ENCODE measurements at regions of chr3 and their contacts with region 1.

Region 1: GRCh38 chr3:42247576-42248027 is 18.4 kb downstream of the CCK start:
- DNase-seq: peak; percentile 82
- H3K4me3 Mint-ChIP-seq: no peak overlapping the region
- H3K27ac Mint-ChIP-seq: no peak overlapping the region
- H3K4me1 Mint-ChIP-seq: peaks cover 8% of the 10 kb centered on the region
- H3K27me3 Mint-ChIP-seq: peaks cover 8% of the 10 kb centered on the region

Region 2: GRCh38 chr3:42267878-42268277 is 20.3 kb after region 1 on chr3:
- CTCF ChIA-PET with region 1: interaction called, 10 read pairs
- intact Hi-C with region 1: no loop called
- DNase-seq: no peak
- H3K4me3 Mint-ChIP-seq: no peak overlapping the region
- H3K27ac Mint-ChIP-seq: no peak overlapping the region
- H3K4me1 Mint-ChIP-seq: peaks cover 9% of the 10 kb centered on the region
- H3K27me3 Mint-ChIP-seq: peaks cover 58% of the 10 kb centered on the region

Region 3: GRCh38 chr3:42539869-42540714 is 292.5 kb after region 1 on chr3:
- CTCF ChIA-PET with region 1: interaction called, 12 read pairs
- intact Hi-C with region 1: loop called (anchors 2 kb)
- DNase-seq: peak; percentile 78
- H3K4me3 Mint-ChIP-seq: no peak overlapping the region
- H3K27ac Mint-ChIP-seq: no peak overlapping the region
- H3K4me1 Mint-ChIP-seq: peaks cover 5% of the 10 kb centered on the region
- H3K27me3 Mint-ChIP-seq: no peaks in the 10 kb centered on the region

Region 4: DNA sequence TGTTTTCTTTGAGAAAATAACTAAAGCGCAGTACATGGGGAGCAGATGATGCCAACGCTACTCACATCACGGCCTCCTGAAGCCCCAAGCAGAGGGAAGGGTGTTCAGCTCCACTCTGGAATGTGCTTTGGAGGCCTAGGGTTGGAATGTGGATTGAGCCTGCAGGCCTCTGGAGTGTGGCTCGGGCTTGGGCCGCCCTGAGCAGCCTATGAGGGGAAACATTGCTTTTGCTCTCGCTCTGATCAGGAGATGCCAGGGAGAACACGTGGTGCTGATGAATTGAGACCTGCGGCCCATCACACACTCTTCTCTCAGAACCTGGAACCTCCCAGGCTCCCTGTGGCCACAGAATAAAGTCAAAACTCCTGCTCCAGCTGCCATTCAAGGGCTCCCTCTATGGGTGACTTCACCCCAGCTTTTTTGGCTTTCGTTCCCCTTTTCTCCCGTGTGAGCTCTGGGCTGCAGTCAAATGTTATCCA is 502.2 kb after region 1 on chr3:
- CTCF ChIA-PET with region 1: no interaction called
- intact Hi-C with region 1: loop called (anchors 10 kb)
- DNase-seq: peak; percentile 29
- H3K4me3 Mint-ChIP-seq: no peak overlapping the region
- H3K27ac Mint-ChIP-seq: no peak overlapping the region
- H3K4me1 Mint-ChIP-seq: peaks cover 26% of the 10 kb centered on the region
- H3K27me3 Mint-ChIP-seq: no peaks in the 10 kb centered on the region

Region 5: GRCh38 chr3:42819351-42819965 is 571.9 kb after region 1 on chr3:
- CTCF ChIA-PET with region 1: no interaction called
- intact Hi-C with region 1: no loop called
- DNase-seq: no peak
- H3K4me3 Mint-ChIP-seq: no peak overlapping the region
- H3K27ac Mint-ChIP-seq: no peak overlapping the region
- H3K4me1 Mint-ChIP-seq: no peaks in the 10 kb centered on the region
- H3K27me3 Mint-ChIP-seq: no peaks in the 10 kb centered on the region

Measured in activated naive CD4-positive, alpha-beta T cell treated with anti-CD3 and anti-CD28 coated beads for 36 hours (primary cell).